ENCODE measurements at regions of chr15 and their contacts with region 1.

Region 1: DNA sequence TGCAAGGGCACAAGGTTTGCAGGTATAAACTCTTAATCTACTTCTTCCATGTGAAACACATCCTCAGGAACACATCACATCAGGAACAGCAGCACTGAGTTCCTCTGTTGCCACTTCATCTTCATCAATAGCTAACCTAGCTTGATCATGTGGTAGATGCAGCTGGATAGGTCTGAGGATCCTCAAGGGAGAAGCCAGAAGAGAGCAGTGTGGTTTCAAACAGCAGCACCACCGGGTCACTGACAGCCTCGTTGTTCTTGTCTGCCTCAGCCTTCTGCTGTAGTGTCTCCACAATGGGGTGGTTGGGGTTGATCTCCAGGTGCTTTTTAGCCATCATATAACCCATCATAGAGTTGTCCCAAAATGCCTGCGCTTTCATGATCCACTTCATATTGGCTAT is 58.8 kb downstream of the ADAM10 start:
- DNase-seq: no peak
- H3K4me3 ChIP-seq: no peak overlapping the region
- H3K27ac ChIP-seq: no peak overlapping the region
- H3K4me1 ChIP-seq: peaks cover 0 to 4% (median 0%) of the 10 kb centered on the region in 4 donors
- H3K27me3 ChIP-seq: no peaks in the 10 kb centered on the region
- CTCF ChIP-seq: no peak
- EP300 ChIP-seq: no peak
- POLR2A ChIP-seq: no peak

Region 2: GRCh38 chr15:58641660-58642059 is 49.0 kb before region 1 on chr15:
- in situ Hi-C with region 1: no loop called
- intact Hi-C with region 1: no loop called
- DNase-seq: no peak
- H3K4me3 ChIP-seq: no peak overlapping the region
- H3K27ac ChIP-seq: no peak overlapping the region
- H3K4me1 ChIP-seq: no peaks in the 10 kb centered on the region
- H3K27me3 ChIP-seq: no peaks in the 10 kb centered on the region
- CTCF ChIP-seq: no peak
- EP300 ChIP-seq: no peak
- POLR2A ChIP-seq: no peak

Region 3: DNA sequence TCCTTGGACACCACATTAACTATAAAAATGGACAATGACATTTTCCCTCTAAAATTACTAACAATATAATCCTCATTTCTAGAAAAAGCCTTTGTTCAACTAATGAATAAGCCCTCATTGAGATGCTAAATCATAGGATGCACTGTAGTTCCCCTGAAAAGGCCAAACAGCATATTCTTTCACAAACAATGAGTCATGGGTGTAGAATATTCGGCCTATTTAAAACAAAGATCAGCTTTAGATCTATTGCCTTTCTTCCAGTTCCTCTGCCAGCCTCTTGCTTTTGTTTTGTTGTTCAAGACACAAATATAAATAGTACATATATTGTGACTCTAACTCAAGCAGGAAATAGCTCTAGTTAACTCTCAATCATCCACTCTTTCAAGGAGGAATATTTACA is 23.7 kb before region 1 on chr15:
- in situ Hi-C with region 1: no loop called
- intact Hi-C with region 1: loop called (anchors 2 kb)
- DNase-seq: no peak
- H3K4me3 ChIP-seq: no peak overlapping the region
- H3K27ac ChIP-seq: no peak overlapping the region
- H3K4me1 ChIP-seq: peaks cover 0 to 11% (median 3%) of the 10 kb centered on the region in 4 donors
- H3K27me3 ChIP-seq: no peaks in the 10 kb centered on the region
- CTCF ChIP-seq: no peak
- EP300 ChIP-seq: no peak
- POLR2A ChIP-seq: no peak

Region 4: GRCh38 chr15:58715266-58715917 is 24.7 kb after region 1 on chr15:
- in situ Hi-C with region 1: no loop called
- intact Hi-C with region 1: loop called (anchors 1 kb)
- DNase-seq: no peak
- H3K4me3 ChIP-seq: no peak overlapping the region
- H3K27ac ChIP-seq: no peak overlapping the region
- H3K4me1 ChIP-seq: no peaks in the 10 kb centered on the region
- H3K27me3 ChIP-seq: no peaks in the 10 kb centered on the region
- CTCF ChIP-seq: no peak
- EP300 ChIP-seq: no peak
- POLR2A ChIP-seq: no peak

Region 5: DNA sequence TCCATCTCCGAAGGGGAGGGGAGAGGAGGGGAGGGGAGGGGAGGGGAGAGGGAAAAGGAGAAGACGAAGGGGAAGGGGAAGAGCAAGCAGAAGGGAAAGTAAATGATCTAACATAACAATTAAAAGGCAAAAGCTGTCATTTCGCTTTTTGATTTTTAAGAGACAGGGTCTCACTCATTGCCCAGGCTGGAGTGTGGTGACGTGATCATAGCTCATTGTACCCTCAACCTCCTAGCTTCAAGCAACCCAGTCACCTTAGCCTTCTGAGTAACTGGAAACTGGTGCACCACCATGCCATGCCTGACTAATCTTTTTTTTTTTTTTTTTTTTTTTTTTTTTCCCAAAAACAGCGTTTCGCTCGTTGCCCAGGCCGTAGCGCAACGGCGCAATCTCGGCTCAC is 36.2 kb after region 1 on chr15:
- in situ Hi-C with region 1: no loop called
- intact Hi-C with region 1: no loop called
- DNase-seq: no peak
- H3K4me3 ChIP-seq: no peak overlapping the region
- H3K27ac ChIP-seq: no peak overlapping the region
- H3K4me1 ChIP-seq: peaks cover 0 to 29% (median 5%) of the 10 kb centered on the region in 4 donors
- H3K27me3 ChIP-seq: no peaks in the 10 kb centered on the region
- CTCF ChIP-seq: no peak
- EP300 ChIP-seq: no peak
- POLR2A ChIP-seq: no peak